ENCODE measurements at regions of chr2 and their contacts with region 1.

Region 1: GRCh38 chr2:10072656-10073480 is 7.3 kb downstream of the CYS1 start:
- DNase-seq: peak; percentile 87
- H3K27ac ChIP-seq: no peak overlapping the region
- CTCF ChIP-seq: peak; percentile 86

Region 2: GRCh38 chr2:9739531-9739964 is 333.3 kb before region 1 on chr2:
- CTCF ChIA-PET with region 1: no interaction called
- POLR2A ChIA-PET with region 1: no interaction called
- DNase-seq: no peak
- H3K27ac ChIP-seq: peak overlapping the region; percentile 63
- CTCF ChIP-seq: no peak

Region 3: GRCh38 chr2:10091182-10091888 is 18.5 kb after region 1 on chr2:
- CTCF ChIA-PET with region 1: interaction called, 54 read pairs
- POLR2A ChIA-PET with region 1: no interaction called
- DNase-seq: no peak
- H3K27ac ChIP-seq: no peak overlapping the region
- CTCF ChIP-seq: no peak

Region 4: DNA sequence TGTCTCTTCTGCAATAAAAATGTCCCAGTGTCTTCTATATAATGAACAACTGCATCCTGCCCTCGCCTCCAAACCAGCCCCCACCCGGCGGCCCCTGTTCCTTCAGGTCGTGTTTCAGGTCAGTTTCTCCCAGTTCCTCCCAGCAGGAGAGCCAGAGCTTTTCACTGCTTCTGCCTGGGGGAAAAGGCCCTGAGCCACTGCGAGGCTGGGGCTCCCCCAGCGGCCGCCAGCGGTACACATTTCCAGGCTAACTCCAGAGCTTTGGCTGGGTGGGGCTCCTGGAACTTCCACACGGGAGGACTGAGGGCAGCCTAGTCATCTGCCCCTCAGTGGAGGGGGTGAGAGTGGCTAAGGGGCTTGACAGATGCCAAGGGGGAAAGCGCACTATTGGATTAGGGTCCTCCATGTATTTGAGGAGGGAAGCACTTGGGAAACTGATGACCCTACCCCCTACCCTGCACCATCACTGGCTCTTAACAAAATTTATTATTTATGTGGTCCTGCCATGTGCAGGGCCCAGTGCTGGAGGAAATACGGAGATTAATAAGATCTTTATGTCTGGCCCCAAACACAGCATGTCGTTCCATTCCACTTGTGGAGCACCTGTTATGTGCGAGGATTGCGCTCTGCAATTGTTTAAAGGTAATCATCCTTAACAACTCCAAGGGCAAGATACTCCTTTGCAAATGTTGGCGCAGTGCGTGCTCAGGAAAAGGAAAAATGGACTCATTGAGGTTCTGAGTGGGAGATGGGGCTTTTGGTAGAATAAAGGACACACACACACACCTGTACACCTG is 24.7 kb after region 1 on chr2:
- CTCF ChIA-PET with region 1: interaction called, 54 read pairs
- POLR2A ChIA-PET with region 1: no interaction called
- DNase-seq: peak; percentile 88
- H3K27ac ChIP-seq: peak overlapping the region; percentile 59
- CTCF ChIP-seq: peak; percentile 96